ENCODE measurements at regions of chr15 and their contacts with region 1.

Region 1: DNA sequence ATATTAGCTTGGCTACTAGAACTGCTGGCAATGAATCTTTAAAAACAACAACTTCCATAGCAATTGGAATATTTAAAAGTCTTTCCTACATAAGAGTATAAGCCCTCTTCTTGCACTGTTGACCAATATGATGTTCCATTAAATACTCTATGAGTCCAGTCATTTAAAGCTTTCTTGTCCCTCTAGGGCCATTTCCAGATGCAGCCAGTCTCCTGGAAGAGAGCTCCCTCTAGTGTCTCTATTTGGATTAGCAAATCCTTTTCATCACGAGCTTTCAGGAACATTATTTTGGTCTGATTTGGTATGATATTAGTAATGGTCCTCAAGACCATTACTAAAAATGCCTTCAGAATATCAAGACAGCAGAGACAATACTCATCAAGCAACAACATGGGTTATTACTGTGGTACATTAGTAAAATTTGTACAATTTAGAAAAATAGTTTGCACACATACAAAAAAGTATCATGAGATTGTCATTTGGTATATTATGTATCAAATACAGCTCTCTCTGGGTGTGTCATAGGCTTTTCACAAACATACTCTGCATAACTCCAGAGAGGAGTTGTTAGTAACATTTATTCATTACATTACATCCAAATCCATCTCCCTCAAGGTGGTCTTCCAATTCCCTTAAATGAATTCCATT is 101.3 kb downstream of the DPH6 start:
- DNase-seq: no peak
- H3K4me3 ChIP-seq: no peak overlapping the region
- CTCF ChIP-seq: no peak
- POLR2A ChIP-seq: no peak

Region 2: GRCh38 chr15:35293353-35294130 is 151.1 kb before region 1 on chr15:
- intact Hi-C with region 1: loop called (anchors 10 kb)
- DNase-seq: no peak
- H3K4me3 ChIP-seq: no peak overlapping the region
- CTCF ChIP-seq: no peak
- POLR2A ChIP-seq: no peak

Region 3: GRCh38 chr15:37061996-37062607 is 1617.4 kb after region 1 on chr15:
- intact Hi-C with region 1: loop called (anchors 5 kb)
- DNase-seq: no peak
- H3K4me3 ChIP-seq: no peak overlapping the region
- CTCF ChIP-seq: no peak
- POLR2A ChIP-seq: no peak